Activated T-helper 2 cell treated with anti-CD3 and anti-CD28 coated beads, Interferon-gamma antibody, Interleukin-2, Interleukin-4, amounts not matched to agents 10 μg/mL and 5 μg/mL and 100 μg/mL, durations not matched to agents 14 hours and 24 hours and 36 hours (primary cell): ENCODE measurements at regions of chr13 and their contacts with region 1.

Region 1: DNA sequence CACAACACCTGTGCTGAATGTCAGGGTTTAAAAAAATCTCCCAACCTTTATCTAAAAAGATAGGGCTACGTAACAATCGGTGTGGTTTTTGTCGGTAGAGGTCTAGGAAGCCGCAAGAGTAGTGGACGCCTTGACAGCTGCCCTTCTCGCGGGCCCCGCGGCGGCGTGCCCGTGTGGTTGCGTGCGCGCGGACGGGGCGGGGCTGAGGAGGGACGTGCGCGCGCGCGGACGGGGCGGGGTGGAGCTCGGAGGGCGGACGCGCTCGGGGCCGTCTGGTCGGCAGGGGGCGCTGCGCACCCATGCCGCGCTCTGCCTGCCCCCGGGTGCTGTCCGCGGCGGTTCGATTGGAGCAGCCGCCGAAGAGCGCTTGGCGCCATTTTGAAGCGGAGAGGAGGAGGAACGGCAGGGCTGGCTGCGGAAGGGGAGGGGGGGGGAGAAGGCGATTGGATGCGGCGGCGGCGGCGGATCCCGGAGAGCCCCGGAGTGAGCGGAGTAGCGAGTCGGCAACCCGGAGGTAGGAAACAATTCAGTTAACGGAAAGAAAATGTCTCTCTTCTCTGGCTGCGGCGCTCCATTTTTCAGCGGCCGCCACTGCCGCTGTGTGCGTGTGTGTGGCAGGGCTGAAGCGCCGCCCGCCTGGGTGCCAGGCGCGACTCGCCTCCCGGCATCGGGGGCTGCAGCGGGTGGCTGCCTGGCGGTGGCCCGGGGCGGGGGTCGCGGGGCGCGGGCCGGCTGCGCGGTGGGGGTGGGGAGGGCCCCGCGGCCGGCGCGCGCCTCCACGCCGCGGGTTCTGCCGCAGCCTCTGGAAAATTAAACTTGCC is at the start of gene PDS5B:
- DNase-seq: peak; percentile 92
- H3K4me3 Mint-ChIP-seq: peak within 1 kb of the TSS; percentile 97
- H3K27ac Mint-ChIP-seq: peak within 1 kb of the TSS; percentile 95
- H3K4me1 Mint-ChIP-seq: peaks cover 40% of the 10 kb centered on the region
- H3K27me3 Mint-ChIP-seq: peaks cover 5% of the 10 kb centered on the region
- total RNA-seq, gene PDS5B: 58.5 and 63.1 TPM in 2 replicates

Region 2: DNA sequence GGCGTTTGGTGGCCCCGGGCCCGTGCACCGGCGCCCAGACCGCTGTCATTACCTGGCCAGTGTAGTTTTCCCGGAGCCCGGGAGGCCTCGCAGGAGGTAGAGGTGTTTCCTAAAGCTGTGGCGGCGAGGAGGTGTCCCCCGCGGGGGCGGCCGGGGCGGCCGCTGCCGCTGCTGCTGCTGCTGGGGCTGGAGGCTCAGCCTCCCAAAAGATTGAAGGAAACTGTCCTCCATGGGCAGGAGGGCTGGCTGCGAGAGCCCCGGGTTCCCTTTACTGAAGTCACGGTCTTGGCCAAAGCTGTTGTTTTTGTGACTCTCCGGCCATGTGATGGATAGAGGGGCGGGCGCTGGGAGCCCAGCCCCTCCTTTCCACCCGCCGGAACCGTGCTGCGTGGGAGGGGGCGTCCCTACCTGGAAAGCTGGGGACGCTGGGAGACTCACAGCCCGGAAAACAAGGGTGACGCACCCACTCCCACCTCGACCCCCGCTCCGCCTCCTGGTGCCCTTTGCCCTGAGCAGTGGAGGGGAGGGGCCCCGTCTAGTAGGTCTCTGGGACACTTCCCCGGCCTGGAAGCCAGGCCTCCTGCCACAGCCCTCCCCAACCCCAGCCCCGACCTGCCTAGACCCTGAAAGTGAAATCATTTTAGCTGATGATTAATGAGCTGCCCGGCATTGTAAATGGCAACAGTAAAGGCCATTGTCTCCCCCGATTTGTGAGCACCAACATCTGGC is 158.3 kb before region 1 on chr13 and contains the start of gene N4BP2L1:
- intact Hi-C with region 1: loop called (anchors 2 kb)
- DNase-seq: peak; percentile 76
- H3K4me3 Mint-ChIP-seq: peak within 1 kb of the TSS; percentile 98
- H3K27ac Mint-ChIP-seq: peak within 1 kb of the TSS; percentile 100
- H3K4me1 Mint-ChIP-seq: peaks cover 39% of the 10 kb centered on the region
- H3K27me3 Mint-ChIP-seq: no peaks in the 10 kb centered on the region
- total RNA-seq, gene N4BP2L1: 26.1 and 28.6 TPM in 2 replicates

Region 3: GRCh38 chr13:32639502-32640105 is 53.3 kb after region 1 on chr13:
- intact Hi-C with region 1: loop called (anchors 1 kb)
- DNase-seq: no peak
- H3K4me3 Mint-ChIP-seq: no peak overlapping the region
- H3K27ac Mint-ChIP-seq: no peak overlapping the region
- H3K4me1 Mint-ChIP-seq: peaks cover 29% of the 10 kb centered on the region
- H3K27me3 Mint-ChIP-seq: no peaks in the 10 kb centered on the region

Region 4: GRCh38 chr13:32669030-32669646 is 82.8 kb after region 1 on chr13:
- intact Hi-C with region 1: loop called (anchors 1 kb)
- DNase-seq: no peak
- H3K4me3 Mint-ChIP-seq: no peak overlapping the region
- H3K27ac Mint-ChIP-seq: no peak overlapping the region
- H3K4me1 Mint-ChIP-seq: peaks cover 2% of the 10 kb centered on the region
- H3K27me3 Mint-ChIP-seq: no peaks in the 10 kb centered on the region

Region 5: DNA sequence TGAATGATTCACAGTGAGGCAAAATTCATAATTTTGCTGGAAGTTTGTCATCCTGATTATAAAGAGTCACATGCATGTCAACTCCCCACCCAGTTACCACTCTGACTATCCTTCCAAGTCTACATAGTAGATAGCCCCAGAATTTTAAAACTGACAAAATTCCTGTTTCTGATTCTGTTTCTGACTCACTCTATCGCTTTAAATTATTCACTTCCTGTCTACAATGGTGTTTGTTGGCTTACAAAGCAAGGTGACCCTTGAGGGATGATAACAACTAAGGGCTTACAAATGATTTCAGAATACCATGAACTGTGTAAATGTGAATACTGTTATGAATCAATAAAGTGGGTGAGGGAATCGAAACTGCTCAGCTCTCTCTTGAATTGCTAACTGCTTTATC is 331.2 kb after region 1 on chr13:
- intact Hi-C with region 1: loop called (anchors 2 kb)
- DNase-seq: no peak
- H3K4me3 Mint-ChIP-seq: no peak overlapping the region
- H3K27ac Mint-ChIP-seq: peak overlapping the region; percentile 53
- H3K4me1 Mint-ChIP-seq: peaks cover 26% of the 10 kb centered on the region
- H3K27me3 Mint-ChIP-seq: no peaks in the 10 kb centered on the region

Region 6: DNA sequence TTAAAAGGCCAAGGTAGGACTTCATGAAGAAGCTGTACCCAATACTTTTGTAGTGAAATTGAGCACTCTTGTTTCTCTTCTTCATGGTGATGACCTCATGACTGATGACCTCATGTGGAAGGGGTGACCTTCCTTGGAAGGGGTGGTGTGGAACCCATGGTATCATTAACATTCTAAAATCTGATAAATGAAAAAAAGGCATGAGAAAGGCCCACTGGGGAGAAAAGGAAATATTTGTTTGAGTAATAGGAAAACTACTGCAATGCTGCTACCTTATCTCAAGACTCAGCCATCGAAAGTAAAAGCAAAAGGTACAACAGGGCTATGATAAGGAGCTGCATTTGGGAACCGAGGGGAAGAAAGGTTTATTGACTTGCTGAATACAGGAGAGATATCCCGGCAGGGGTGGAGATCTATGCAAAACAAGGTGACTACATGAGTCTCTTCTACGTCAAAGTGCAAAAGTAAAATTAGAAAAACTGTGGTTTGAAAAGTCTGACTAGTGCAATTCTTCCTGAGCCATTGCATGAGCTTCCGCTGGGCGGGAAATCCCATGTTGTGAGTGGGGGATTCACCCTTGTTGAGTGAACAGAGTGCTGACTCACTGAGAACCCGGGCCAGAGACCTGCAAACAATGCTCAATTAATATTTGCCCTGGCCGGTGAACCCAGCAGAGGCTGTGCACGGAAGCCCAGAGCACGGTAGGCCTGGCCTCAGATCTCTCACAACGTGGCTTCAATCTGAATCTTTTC is 1092.8 kb after region 1 on chr13:
- intact Hi-C with region 1: loop called (anchors 2 kb)
- DNase-seq: peak; percentile 53
- H3K4me3 Mint-ChIP-seq: peak overlapping the region; percentile 76
- H3K27ac Mint-ChIP-seq: peak overlapping the region; percentile 91
- H3K4me1 Mint-ChIP-seq: peaks cover 46% of the 10 kb centered on the region
- H3K27me3 Mint-ChIP-seq: no peaks in the 10 kb centered on the region